ENCODE measurements at regions of chr4 and their contacts with region 1.

Region 1: GRCh38 chr4:89506866-89507494 is 199.4 kb upstream of the GPRIN3 start:
- DNase-seq: no peak
- H3K4me3 Mint-ChIP-seq: no peak overlapping the region
- H3K27ac Mint-ChIP-seq: no peak overlapping the region
- H3K4me1 Mint-ChIP-seq: peaks cover 20% of the 10 kb centered on the region
- H3K27me3 Mint-ChIP-seq: no peaks in the 10 kb centered on the region
- CTCF ChIP-seq: no peak

Region 2: GRCh38 chr4:89344571-89344970 is 162.4 kb before region 1 on chr4:
- CTCF ChIA-PET with region 1: no interaction called
- POLR2A ChIA-PET with region 1: no interaction called
- intact Hi-C with region 1: no loop called
- DNase-seq: no peak
- H3K4me3 Mint-ChIP-seq: no peak overlapping the region
- H3K27ac Mint-ChIP-seq: no peak overlapping the region
- H3K4me1 Mint-ChIP-seq: no peaks in the 10 kb centered on the region
- H3K27me3 Mint-ChIP-seq: no peaks in the 10 kb centered on the region
- CTCF ChIP-seq: no peak

Region 3: GRCh38 chr4:89410687-89411086 is 96.3 kb before region 1 on chr4:
- CTCF ChIA-PET with region 1: no interaction called
- POLR2A ChIA-PET with region 1: no interaction called
- intact Hi-C with region 1: no loop called
- DNase-seq: peak; percentile 9
- H3K4me3 Mint-ChIP-seq: no peak overlapping the region
- H3K27ac Mint-ChIP-seq: no peak overlapping the region
- H3K4me1 Mint-ChIP-seq: peaks cover 5% of the 10 kb centered on the region
- H3K27me3 Mint-ChIP-seq: no peaks in the 10 kb centered on the region
- CTCF ChIP-seq: no peak

Region 4: DNA sequence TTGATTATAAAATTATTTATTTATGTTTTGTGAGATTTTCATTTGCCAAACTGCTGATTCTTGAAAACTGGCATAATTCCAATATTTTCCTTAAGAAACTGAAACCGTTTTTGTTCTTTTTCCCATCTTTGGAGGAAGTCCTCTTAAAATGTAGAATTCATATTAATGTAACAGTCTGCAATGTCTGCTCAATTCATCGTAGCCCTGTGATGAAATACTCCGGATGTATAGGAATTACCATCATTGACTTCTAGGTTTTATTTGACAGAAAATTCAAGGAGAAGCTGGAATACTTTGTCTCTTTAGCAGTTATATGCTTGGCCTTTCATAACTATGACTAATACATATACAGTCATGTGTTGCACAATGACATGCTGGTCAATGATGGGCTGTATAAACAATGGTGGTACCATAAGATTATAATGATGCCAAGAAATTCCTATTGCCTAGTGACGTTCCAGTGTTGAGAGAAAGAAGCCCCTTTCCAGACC is 14.4 kb before region 1 on chr4:
- CTCF ChIA-PET with region 1: interaction called, 3 read pairs
- POLR2A ChIA-PET with region 1: interaction called, 11 read pairs
- intact Hi-C with region 1: no loop called
- DNase-seq: peak; percentile 86
- H3K4me3 Mint-ChIP-seq: peak overlapping the region; percentile 52
- H3K27ac Mint-ChIP-seq: peak overlapping the region; percentile 55
- H3K4me1 Mint-ChIP-seq: peaks cover 18% of the 10 kb centered on the region
- H3K27me3 Mint-ChIP-seq: no peaks in the 10 kb centered on the region
- CTCF ChIP-seq: no peak

Measured in MCF 10A (cell line).